Cardiac septum (tissue), 1 donor: ENCODE measurements at regions of chr6 and their contacts with region 1.

Region 1: GRCh38 chr6:118565311-118565960 is 17.3 kb downstream of the PLN start:
- DNase-seq: no peak

Region 2: GRCh38 chr6:118542184-118542952 is 23.1 kb before region 1 on chr6:
- intact Hi-C with region 1: no loop called
- DNase-seq: no peak

Region 3: DNA sequence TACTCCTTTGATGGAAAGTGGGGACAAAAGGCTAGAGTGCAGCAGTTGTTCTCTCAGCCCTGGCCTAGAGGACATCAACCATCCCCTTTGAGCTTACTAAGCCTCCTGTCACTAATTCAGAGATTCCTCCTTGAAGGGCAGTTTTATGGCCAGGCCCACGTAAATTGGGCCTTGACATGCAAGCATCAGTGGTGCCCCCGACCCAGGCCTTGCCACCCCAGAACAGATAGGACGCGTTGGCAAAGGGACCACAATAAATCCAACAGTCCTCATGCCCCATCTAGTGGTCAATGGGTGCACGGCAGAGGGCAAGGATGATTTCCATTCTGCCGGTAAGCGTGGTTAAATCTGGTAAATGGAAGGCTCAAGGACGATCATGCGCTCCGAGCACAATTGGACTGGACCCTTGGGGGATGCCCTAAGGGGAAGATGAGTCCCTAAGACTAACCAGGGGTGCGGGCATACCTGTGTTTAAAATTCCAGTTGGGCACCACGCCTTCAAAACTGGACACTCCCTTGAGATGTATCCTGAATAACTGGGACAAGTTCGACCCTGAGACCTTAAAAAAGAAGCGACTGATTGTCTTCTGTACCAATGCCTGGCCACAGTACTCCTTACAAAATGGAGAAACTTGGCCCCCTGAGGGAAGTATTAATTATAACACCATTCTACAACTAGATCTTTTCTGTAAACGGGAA is 53.4 kb after region 1 on chr6:
- intact Hi-C with region 1: loop called (anchors 5 kb)
- DNase-seq: peak; percentile 82